CD14-positive monocyte (primary cell): ENCODE measurements at regions of chr9 and their contacts with region 1.

Region 1: GRCh38 chr9:27436234-27436633 is 87.9 kb upstream of the IFNK start:
- DNase-seq: no peak
- H3K4me3 ChIP-seq: no peak overlapping the region
- H3K4me3 Mint-ChIP-seq: no peak overlapping the region
- H3K27ac ChIP-seq: no peak overlapping the region
- H3K27ac Mint-ChIP-seq: no peak overlapping the region
- H3K4me1 ChIP-seq: peaks cover 16 to 17% of the 10 kb centered on the region in 2 donors
- H3K4me1 Mint-ChIP-seq: peaks cover 15% of the 10 kb centered on the region
- H3K27me3 ChIP-seq: no peaks in the 10 kb centered on the region
- H3K27me3 Mint-ChIP-seq: peaks cover 0 to 1% (median 0%) of the 10 kb centered on the region in 3 donors
- CTCF ChIP-seq: no peak

Region 2: DNA sequence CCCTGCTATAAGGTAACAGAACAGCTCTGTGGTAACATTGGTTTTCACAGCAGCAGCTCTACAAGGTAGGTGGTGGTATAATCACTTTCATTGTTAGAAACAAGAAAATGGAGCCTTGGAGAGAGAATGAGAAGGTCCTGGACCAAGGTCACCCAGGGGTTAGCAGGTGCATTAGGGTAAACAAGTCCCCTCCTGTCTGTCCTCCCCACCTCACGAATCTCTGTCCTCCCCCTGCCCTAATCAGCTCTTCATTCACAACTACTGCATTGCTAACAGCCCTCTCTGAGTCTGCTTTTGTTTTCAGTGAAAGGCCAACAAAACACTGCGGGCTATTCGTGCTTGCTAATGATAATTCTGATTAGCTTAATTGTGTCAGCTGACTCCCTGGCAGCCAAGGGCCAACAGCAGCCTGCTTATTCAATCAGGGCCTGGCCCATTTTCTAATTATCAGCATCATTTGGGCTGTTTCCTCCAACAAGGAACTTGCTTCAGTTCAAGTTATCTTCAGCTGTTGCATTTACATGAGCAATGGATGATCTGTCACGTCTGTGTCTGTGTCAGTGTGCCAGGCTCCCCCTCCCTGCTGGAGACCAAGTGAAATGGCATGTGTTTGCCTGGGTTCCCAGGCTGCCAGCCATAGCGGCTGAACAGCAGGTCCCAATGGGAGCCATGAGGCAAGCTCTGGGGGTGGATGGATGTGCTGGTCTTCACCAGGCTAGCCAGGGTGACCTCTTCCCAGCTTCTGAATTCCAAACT is 82.6 kb before region 1 on chr9:
- intact Hi-C with region 1: no loop called
- DNase-seq: peak; percentile 22 to 58 (median 30)
- H3K4me3 ChIP-seq: no peak overlapping the region
- H3K4me3 Mint-ChIP-seq: no peak overlapping the region
- H3K27ac ChIP-seq: peak overlapping the region in 1 of 2 donors; percentile 56
- H3K27ac Mint-ChIP-seq: peak overlapping the region in 6 of 7 donors; percentile 57 to 91 (median 86)
- H3K4me1 ChIP-seq: peaks cover 46 to 47% of the 10 kb centered on the region in 2 donors
- H3K4me1 Mint-ChIP-seq: peaks cover 52% of the 10 kb centered on the region
- H3K27me3 ChIP-seq: no peaks in the 10 kb centered on the region
- H3K27me3 Mint-ChIP-seq: peaks cover 0 to 4% (median 3%) of the 10 kb centered on the region in 3 donors
- CTCF ChIP-seq: no peak

Region 3: DNA sequence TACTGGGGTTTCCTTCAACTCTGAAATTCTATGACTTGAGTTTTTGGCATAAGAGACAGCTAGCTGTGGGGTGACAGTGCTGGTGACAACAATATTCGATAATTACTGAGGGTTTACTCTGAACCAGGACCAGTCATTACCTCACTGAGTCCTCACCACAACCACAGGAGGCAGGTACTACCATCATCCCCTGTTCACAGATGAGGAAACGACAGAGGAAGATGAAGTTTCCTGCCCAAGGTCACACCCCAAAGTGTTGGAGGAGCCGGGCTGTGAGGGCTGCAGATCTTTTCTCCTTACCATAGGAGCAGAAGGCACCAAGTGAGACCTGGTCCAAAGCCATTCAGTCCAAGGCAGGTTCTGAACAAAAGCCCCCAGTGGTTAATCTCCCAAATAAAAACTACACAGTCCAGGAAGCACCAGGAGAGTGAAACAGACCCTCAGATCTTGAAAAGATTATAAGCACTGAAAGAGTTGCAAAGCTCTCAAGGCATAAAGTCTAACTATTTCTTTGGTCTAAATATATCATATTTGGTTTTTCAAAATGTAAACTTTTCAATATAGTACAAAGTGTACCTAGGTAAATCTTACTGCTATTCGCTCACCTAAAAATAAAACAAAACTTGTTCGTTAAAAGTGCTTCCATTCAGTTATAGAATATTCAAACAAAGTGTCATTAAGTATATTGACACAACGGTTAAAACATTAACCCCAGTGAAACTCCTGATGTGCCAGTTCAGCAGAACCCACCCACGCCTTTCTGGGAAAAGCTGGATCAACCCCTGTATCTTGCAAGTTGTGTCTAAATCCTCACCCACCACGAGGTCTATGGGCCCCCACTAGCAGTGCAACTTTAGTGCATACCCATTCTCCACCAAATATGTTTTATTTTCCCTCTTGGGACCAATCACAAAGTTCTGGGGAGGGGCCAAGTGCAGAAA is 56.7 kb before region 1 on chr9:
- intact Hi-C with region 1: loop called in 1 of 2 experiments (anchors 10 kb)
- DNase-seq: no peak
- H3K4me3 ChIP-seq: no peak overlapping the region
- H3K4me3 Mint-ChIP-seq: no peak overlapping the region
- H3K27ac ChIP-seq: no peak overlapping the region
- H3K27ac Mint-ChIP-seq: no peak overlapping the region
- H3K4me1 ChIP-seq: peaks cover 10 to 14% of the 10 kb centered on the region in 2 donors
- H3K4me1 Mint-ChIP-seq: peaks cover 20% of the 10 kb centered on the region
- H3K27me3 ChIP-seq: no peaks in the 10 kb centered on the region
- H3K27me3 Mint-ChIP-seq: peaks cover 0 to 1% (median 0%) of the 10 kb centered on the region in 3 donors
- CTCF ChIP-seq: no peak

Region 4: GRCh38 chr9:27407986-27408385 is 28.2 kb before region 1 on chr9:
- intact Hi-C with region 1: no loop called
- DNase-seq: no peak
- H3K4me3 ChIP-seq: no peak overlapping the region
- H3K4me3 Mint-ChIP-seq: no peak overlapping the region
- H3K27ac ChIP-seq: no peak overlapping the region
- H3K27ac Mint-ChIP-seq: no peak overlapping the region
- H3K4me1 ChIP-seq: peaks cover 0 to 8% of the 10 kb centered on the region in 2 donors
- H3K4me1 Mint-ChIP-seq: peaks cover 15% of the 10 kb centered on the region
- H3K27me3 ChIP-seq: no peaks in the 10 kb centered on the region
- H3K27me3 Mint-ChIP-seq: peaks cover 0 to 2% (median 1%) of the 10 kb centered on the region in 3 donors
- CTCF ChIP-seq: no peak

Region 5: GRCh38 chr9:27561685-27562084 is 125.5 kb after region 1 on chr9:
- intact Hi-C with region 1: no loop called
- DNase-seq: no peak
- H3K4me3 ChIP-seq: no peak overlapping the region
- H3K4me3 Mint-ChIP-seq: no peak overlapping the region
- H3K27ac ChIP-seq: peak overlapping the region in 1 of 2 donors; percentile 50
- H3K27ac Mint-ChIP-seq: peak overlapping the region in 5 of 7 donors; percentile 16 to 76 (median 38)
- H3K4me1 ChIP-seq: peaks cover 37 to 44% of the 10 kb centered on the region in 2 donors
- H3K4me1 Mint-ChIP-seq: peaks cover 41% of the 10 kb centered on the region
- H3K27me3 ChIP-seq: no peaks in the 10 kb centered on the region
- H3K27me3 Mint-ChIP-seq: no peaks in the 10 kb centered on the region
- CTCF ChIP-seq: no peak